GM12878 (cell line): ENCODE measurements at regions of chr15 and their contacts with region 1.

Region 1: GRCh38 chr15:39118510-39118909 is 462.4 kb upstream of the THBS1 start:
- DNase-seq: no peak
- ATAC-seq: no peak
- H3K4me3 ChIP-seq: no peak overlapping the region
- H3K27ac ChIP-seq: no peak overlapping the region
- H3K4me1 ChIP-seq: no peaks in the 10 kb centered on the region
- H3K27me3 ChIP-seq: no peaks in the 10 kb centered on the region
- CTCF ChIP-seq: no peak
- EP300 ChIP-seq: no peak
- POLR2A ChIP-seq: no peak
- RAD21 ChIP-seq: no peak

Region 2: GRCh38 chr15:39171944-39172368 is 53.4 kb after region 1 on chr15:
- CTCF ChIA-PET with region 1: interaction called, 3 read pairs
- POLR2A ChIA-PET with region 1: no interaction called
- RAD21 ChIA-PET with region 1: no interaction called
- SMC1A ChIA-PET with region 1: no interaction called
- in situ Hi-C with region 1: no loop called
- intact Hi-C with region 1: loop called (anchors 10 kb)
- DNase-seq: peak; percentile 19
- ATAC-seq: peak; percentile 70
- H3K4me3 ChIP-seq: no peak overlapping the region
- H3K27ac ChIP-seq: no peak overlapping the region
- H3K4me1 ChIP-seq: peaks cover 10% of the 10 kb centered on the region
- H3K27me3 ChIP-seq: no peaks in the 10 kb centered on the region
- CTCF ChIP-seq: peak in 2 of 3 experiments; percentile 26 to 53; a peak in 4 of 6 replicates
- EP300 ChIP-seq: no peak
- POLR2A ChIP-seq: no peak
- RAD21 ChIP-seq: peak; percentile 60